Activated CD4-positive, alpha-beta T cell treated with anti-CD3 and anti-CD28 coated beads for 36 hours (primary cell): ENCODE measurements at regions of chr12 and their contacts with region 1.

Region 1: DNA sequence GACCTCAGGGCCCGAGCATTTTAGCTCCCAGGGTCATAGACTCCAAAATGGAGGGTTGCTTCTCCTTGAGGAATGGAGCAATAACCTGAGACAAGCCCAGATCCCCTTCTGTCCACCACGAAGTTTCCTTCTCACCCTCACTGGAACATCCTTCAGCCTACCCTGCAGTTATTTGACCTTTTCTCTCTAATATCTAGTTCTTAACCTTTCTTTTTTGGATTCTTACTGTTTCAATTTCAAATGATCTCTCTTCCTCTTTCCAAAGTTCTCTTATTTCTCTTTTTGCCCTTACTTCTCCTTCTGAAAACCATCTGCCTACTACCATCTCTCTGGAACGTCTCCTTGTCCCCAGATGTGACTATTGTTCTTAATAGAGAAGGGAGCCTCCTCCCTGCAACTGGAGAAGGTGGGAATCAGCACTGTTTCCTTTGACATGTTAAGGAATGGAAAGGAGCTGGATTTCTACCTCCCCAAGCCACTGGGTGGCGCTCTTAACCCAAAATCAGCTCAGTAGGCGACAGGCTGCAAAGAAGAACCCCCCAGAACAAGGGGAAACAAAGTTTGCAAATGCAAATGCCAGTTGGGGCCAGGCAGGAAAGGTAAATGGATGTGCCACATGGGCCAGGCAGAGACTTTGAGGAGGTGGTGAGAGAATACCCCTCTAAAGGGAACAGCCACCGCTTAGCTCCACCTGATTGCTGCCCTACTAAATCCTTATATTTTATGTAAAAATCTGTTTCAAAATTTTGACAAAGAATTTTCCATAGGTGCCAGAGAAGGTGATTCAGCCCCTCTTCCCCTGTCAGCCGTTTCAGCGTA is 22.4 kb upstream of the PDE1B start:
- DNase-seq: peak; percentile 73
- ATAC-seq: no peak
- H3K4me3 Mint-ChIP-seq: no peak overlapping the region
- H3K27ac Mint-ChIP-seq: peak overlapping the region; percentile 14
- H3K4me1 Mint-ChIP-seq: peaks cover 28% of the 10 kb centered on the region
- H3K27me3 Mint-ChIP-seq: no peaks in the 10 kb centered on the region

Region 2: GRCh38 chr12:54497883-54498282 is 29.1 kb before region 1 on chr12:
- CTCF ChIA-PET with region 1: interaction called, 18 read pairs
- POLR2A ChIA-PET with region 1: interaction called, 5 read pairs
- intact Hi-C with region 1: loop called in 1 of 2 experiments (anchors 1 kb)
- DNase-seq: no peak
- ATAC-seq: peak; percentile 4
- H3K4me3 Mint-ChIP-seq: peak overlapping the region; percentile 99
- H3K27ac Mint-ChIP-seq: peak overlapping the region; percentile 98
- H3K4me1 Mint-ChIP-seq: peaks cover 39% of the 10 kb centered on the region
- H3K27me3 Mint-ChIP-seq: no peaks in the 10 kb centered on the region

Region 3: GRCh38 chr12:54549774-54550451 is 22.9 kb after region 1 on chr12:
- CTCF ChIA-PET with region 1: interaction called, 21 read pairs
- POLR2A ChIA-PET with region 1: no interaction called
- intact Hi-C with region 1: no loop called
- DNase-seq: peak; percentile 75
- ATAC-seq: peak; percentile 91
- H3K4me3 Mint-ChIP-seq: peak overlapping the region; percentile 81
- H3K27ac Mint-ChIP-seq: peak overlapping the region; percentile 83
- H3K4me1 Mint-ChIP-seq: peaks cover 37% of the 10 kb centered on the region
- H3K27me3 Mint-ChIP-seq: peaks cover 6% of the 10 kb centered on the region

Region 4: DNA sequence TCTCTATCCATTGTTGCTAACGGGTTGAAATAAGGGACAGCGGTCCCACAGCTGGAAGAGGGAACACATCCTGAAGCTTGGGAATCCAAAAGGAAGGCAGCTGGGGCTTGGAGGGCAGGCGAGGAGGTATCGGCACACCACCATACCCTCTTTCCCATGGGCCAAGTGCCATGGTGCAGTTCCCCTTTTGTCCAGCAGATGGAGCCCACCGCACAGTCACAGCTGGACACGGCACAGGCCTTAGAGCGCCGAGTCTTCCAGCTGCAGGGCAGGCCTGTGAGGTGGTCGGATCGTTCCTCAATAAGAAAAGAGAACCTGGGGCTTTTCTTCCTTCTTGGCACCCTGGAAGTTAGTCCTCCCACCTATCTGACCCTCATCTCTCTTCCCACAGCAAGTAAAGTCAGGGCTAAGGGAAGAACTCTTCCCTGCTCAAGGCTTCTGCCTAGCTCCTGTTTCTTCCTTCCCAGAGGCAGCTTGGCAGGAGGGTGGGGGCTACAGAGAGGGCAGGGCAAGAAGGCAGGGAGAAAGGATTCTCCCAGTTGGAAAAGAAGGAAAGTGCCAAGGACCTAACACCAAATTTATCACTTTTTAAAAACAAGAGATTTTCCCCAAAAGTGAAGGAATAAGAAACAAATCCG is 52.8 kb after region 1 on chr12:
- CTCF ChIA-PET with region 1: interaction called, 15 read pairs
- POLR2A ChIA-PET with region 1: no interaction called
- intact Hi-C with region 1: no loop called
- DNase-seq: peak; percentile 92
- ATAC-seq: peak; percentile 97
- H3K4me3 Mint-ChIP-seq: no peak overlapping the region
- H3K27ac Mint-ChIP-seq: no peak overlapping the region
- H3K4me1 Mint-ChIP-seq: no peaks in the 10 kb centered on the region
- H3K27me3 Mint-ChIP-seq: peaks cover 3% of the 10 kb centered on the region

Region 5: DNA sequence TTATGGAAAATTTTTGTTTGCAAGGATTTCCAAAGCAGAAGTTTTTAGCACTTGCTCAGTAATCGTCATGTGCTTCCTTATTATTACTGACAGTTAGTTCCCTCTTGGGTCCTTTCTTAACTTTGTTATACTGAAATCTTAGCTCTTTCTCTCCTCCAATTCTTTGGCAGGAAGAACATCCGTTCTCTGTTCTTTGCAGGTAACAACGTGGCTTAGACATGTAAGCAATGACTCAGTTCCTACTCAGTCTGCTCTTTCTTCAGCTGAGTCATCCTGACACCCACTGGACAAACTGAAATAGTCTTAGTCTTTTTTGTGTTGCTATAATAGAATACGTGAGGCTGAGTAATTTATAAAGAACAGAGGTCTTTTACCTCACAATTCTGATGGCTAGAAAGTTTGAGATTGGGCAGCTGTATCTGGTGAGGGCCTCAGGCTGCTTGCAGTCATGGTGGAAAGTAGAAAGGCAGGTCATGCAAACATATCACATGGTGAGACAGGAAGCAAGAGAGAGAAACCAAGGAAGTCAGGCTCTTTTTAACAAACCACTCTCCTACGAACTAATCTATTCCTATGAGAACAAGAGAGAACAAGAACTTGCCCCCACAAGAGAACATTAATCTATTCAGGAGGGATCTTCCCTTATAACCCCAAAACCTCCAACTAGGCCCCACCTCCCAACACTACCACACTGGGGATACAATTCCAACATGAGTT is 408.4 kb after region 1 on chr12:
- CTCF ChIA-PET with region 1: interaction called, 3 read pairs
- POLR2A ChIA-PET with region 1: no interaction called
- intact Hi-C with region 1: loop called in 1 of 2 experiments (anchors 2 kb)
- DNase-seq: peak; percentile 62
- ATAC-seq: peak; percentile 92
- H3K4me3 Mint-ChIP-seq: peak overlapping the region; percentile 45
- H3K27ac Mint-ChIP-seq: peak overlapping the region; percentile 96
- H3K4me1 Mint-ChIP-seq: peaks cover 69% of the 10 kb centered on the region
- H3K27me3 Mint-ChIP-seq: no peaks in the 10 kb centered on the region